Psoas muscle (tissue), 8 donors: ENCODE measurements at regions of chr1 and their contacts with region 1.

Region 1: DNA sequence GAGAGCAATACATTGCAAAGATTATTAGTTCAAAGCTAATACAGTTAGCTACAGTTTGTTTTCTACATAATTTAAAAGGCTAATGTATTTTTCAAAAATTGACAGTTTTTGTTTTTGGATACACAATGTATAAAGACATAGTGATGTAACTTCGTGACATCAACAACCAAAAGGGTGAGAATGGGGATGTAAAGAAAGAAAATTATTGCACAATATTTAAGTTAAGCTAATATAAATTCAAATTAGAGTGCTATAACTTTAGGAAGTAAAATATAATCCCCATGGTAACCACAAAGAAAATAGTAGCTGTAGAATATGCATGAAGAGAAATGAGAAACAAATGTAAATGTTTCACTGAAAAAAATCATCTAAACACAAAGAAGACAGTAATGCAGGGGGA is 334.4 kb upstream of the DEPDC1 start:
- DNase-seq: no peak
- ATAC-seq: no peak
- H3K4me3 ChIP-seq: no peak overlapping the region
- H3K27ac ChIP-seq: no peak overlapping the region
- H3K4me1 ChIP-seq: no peaks in the 10 kb centered on the region
- H3K27me3 ChIP-seq: no peaks in the 10 kb centered on the region
- CTCF ChIP-seq: no peak

Region 2: GRCh38 chr1:69504730-69505252 is 673.5 kb after region 1 on chr1:
- intact Hi-C with region 1: loop called in 1 of 2 experiments (anchors 5 kb)
- DNase-seq: no peak
- ATAC-seq: no peak
- H3K4me3 ChIP-seq: no peak overlapping the region
- H3K27ac ChIP-seq: no peak overlapping the region
- H3K4me1 ChIP-seq: no peaks in the 10 kb centered on the region
- H3K27me3 ChIP-seq: no peaks in the 10 kb centered on the region
- CTCF ChIP-seq: no peak